ENCODE measurements at regions of chr1 and their contacts with region 1.

Region 1: GRCh38 chr1:27603681-27604578 is at the start of gene AHDC1:
- DNase-seq: peak; percentile 94 to 96
- H3K4me3 ChIP-seq: peak within 1 kb of the TSS; percentile 93 to 99
- H3K27ac ChIP-seq: peak within 1 kb of the TSS; percentile 97 to 99
- H3K4me1 ChIP-seq: peaks cover 0 to 43% (median 36%) of the 10 kb centered on the region in 4 donors
- H3K27me3 ChIP-seq: no peaks in the 10 kb centered on the region
- CTCF ChIP-seq: peak; percentile 10 to 60

Region 2: DNA sequence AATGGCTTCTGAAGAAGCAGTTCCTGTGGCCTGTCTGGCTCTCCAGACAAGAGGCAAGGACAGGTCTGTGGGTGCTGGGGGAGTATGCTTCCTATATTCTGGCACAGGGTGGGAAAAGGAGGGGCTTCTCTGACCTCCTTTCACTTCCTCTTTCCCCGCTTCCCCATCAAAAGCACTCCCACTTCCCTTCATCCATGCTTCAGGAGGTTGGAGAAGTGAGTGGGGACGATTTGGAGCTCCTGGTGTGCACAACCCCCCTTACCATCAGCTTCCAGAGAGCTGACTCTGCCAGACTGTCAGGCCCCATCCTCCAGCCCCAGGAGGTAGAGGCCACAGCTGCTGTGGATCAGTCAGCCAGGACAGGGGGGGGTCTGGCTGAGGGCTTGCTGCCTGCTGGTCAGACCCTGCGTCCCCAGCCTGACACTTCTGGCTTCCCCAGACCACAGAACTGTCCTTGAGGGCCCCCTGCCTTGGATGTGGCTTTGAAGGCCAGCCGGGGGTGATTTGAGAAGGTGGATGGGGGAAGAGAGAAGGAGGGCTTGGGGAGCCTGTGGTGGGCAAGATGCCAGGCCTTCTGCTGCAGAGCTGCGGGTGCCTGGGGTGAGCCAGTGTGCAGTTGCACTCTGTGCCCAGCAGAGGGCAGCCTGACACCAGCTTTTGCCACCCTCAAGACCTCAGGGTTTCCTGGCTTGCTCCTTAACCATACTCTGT is 303.4 kb before region 1 on chr1:
- intact Hi-C with region 1: loop called (anchors 10 kb)
- DNase-seq: peak; percentile 74 to 87
- H3K4me3 ChIP-seq: no peak overlapping the region
- H3K27ac ChIP-seq: no peak overlapping the region
- H3K4me1 ChIP-seq: peaks cover 0 to 35% (median 8%) of the 10 kb centered on the region in 4 donors
- H3K27me3 ChIP-seq: no peaks in the 10 kb centered on the region
- CTCF ChIP-seq: peak; percentile 98

Region 3: GRCh38 chr1:27341525-27342252 is 262.2 kb before region 1 on chr1 and contains the start of gene SYTL1:
- intact Hi-C with region 1: no loop called
- DNase-seq: no peak
- H3K4me3 ChIP-seq: no peak within 1 kb of the TSS
- H3K27ac ChIP-seq: no peak within 1 kb of the TSS
- H3K4me1 ChIP-seq: no peaks in the 10 kb centered on the region
- H3K27me3 ChIP-seq: no peaks in the 10 kb centered on the region
- CTCF ChIP-seq: no peak

Region 4: GRCh38 chr1:27402349-27402754 is 201.6 kb before region 1 on chr1:
- intact Hi-C with region 1: loop called (anchors 2 kb)
- DNase-seq: peak; percentile 90 to 94
- H3K4me3 ChIP-seq: no peak overlapping the region
- H3K27ac ChIP-seq: peak overlapping the region; percentile 76 to 78
- H3K4me1 ChIP-seq: peaks cover 0 to 74% (median 42%) of the 10 kb centered on the region in 4 donors
- H3K27me3 ChIP-seq: no peaks in the 10 kb centered on the region
- CTCF ChIP-seq: peak; percentile 78

Region 5: DNA sequence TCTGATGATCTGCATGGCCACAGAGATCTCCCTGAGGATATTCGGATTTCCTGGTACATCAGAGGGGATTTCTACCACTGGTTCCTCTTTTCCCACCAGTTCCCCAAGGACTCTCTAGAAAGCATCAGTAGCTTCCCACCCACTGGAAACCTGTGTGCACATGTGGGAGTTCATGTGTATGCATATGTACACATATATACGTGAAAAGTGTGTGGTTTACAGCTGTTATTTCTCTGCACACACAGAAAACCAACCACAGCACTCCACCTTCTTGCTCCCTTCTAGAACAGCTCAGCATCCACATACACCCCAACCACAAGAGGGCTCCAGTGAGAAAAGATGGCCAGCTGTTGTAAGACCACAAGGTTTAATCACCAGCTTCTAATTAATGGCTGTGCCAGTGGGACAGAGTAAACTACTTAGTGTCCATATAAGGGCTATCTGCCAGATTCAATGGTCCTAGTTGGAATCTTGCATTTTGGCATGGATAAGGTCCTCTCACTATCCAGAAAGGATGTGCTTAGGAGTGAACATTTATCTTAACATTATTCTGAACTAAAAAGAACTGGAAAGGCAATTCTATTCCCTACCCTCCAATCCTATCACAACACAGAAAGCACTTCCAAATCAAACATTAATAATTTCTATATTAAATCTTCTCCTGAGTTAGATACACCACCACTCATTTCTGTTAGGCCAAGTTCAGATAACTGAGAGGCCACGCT is 187.4 kb before region 1 on chr1:
- intact Hi-C with region 1: loop called (anchors 5 kb)
- DNase-seq: no peak
- H3K4me3 ChIP-seq: no peak overlapping the region
- H3K27ac ChIP-seq: peak overlapping the region; percentile 78 to 81
- H3K4me1 ChIP-seq: peaks cover 8 to 62% (median 45%) of the 10 kb centered on the region in 4 donors
- H3K27me3 ChIP-seq: no peaks in the 10 kb centered on the region
- CTCF ChIP-seq: peak; percentile 40 to 46

Region 6: DNA sequence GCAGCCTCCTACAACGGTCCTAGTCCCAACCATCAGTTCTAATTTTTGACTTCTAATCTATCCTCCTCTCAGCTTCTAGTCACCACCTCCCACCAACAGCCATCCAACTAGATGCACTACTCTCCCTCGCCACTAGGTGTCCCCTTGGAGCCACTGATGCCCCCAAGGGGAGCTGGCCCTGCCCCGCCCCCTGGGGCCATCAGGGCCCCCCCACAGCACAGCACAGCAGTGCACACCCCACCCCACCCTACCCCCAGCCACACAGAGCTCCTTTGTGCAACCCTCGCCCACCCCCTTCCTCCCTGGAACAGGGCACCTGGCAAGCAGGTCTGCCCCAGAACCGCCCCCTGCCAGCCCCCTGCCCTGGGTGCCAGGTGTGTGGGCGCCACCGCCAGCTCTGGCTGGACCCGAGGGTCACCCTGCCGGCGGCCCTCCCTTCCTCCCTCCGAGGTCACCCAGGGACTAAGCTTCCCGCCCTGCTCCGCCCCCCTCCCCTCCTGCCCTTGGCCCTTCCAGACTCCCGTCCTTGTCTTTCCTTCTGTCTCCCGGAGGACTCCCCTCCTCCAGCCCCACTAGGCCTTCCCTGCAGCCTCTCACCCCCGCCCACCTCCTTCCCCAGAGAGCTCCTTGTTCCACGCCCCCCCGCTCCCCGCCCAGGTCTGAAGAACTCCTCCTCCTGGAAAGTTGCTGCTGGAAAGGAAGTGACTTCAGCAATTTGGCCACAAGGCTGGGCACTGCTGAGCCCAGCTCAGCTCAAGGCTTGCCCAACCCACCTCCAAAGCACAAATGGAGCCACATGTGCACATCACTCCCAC is 46.9 kb before region 1 on chr1:
- intact Hi-C with region 1: loop called (anchors 5 kb)
- DNase-seq: peak; percentile 97 to 99
- H3K4me3 ChIP-seq: peak overlapping the region; percentile 37 to 47
- H3K27ac ChIP-seq: peak overlapping the region; percentile 90 to 97
- H3K4me1 ChIP-seq: peaks cover 20 to 77% (median 70%) of the 10 kb centered on the region in 4 donors
- H3K27me3 ChIP-seq: no peaks in the 10 kb centered on the region
- CTCF ChIP-seq: peak; percentile 84 to 96

Region 7: GRCh38 chr1:27568300-27569087 is 35.4 kb before region 1 on chr1:
- intact Hi-C with region 1: loop called (anchors 2 kb)
- DNase-seq: peak; percentile 96 to 99
- H3K4me3 ChIP-seq: peak overlapping the region; percentile 43 to 53
- H3K27ac ChIP-seq: peak overlapping the region; percentile 97 to 99
- H3K4me1 ChIP-seq: peaks cover 33 to 98% (median 97%) of the 10 kb centered on the region in 4 donors
- H3K27me3 ChIP-seq: no peaks in the 10 kb centered on the region
- CTCF ChIP-seq: peak; percentile 70 to 73